ENCODE measurements at regions of chrX and their contacts with region 1.

Region 1: GRCh38 chrX:18360867-18361266 is 6.4 kb upstream of the SCML2 start:
- DNase-seq: no peak
- ATAC-seq: no peak
- H3K4me3 ChIP-seq: no peak overlapping the region
- H3K27ac ChIP-seq: no peak overlapping the region
- H3K4me1 ChIP-seq: no peaks in the 10 kb centered on the region
- H3K27me3 ChIP-seq: no peaks in the 10 kb centered on the region
- CTCF ChIP-seq: no peak
- POLR2A ChIP-seq: no peak

Region 2: DNA sequence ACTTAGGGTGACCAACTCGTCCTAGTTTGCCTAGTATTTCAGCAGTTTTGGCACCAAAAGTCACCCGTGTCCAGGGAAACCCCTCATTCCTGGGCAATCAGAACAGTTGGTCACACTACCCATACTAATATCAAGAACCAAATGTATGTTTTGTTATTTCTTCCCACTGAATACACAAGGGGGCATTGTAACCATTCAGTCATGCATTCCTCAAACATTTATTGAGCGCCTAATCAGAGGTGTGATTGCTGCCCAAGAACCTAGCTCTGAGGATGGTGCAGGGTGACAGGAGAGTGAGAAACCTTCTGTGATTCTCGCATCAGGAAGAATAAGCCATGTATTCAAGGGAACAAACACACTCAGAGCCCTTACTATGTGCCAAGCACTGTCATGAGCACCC is 430.0 kb before region 1 on chrX:
- intact Hi-C with region 1: loop called in 1 of 2 experiments (anchors 10 kb)
- DNase-seq: no peak
- ATAC-seq: no peak
- H3K4me3 ChIP-seq: no peak overlapping the region
- H3K27ac ChIP-seq: no peak overlapping the region
- H3K4me1 ChIP-seq: no peaks in the 10 kb centered on the region
- H3K27me3 ChIP-seq: no peaks in the 10 kb centered on the region
- CTCF ChIP-seq: no peak
- POLR2A ChIP-seq: no peak